Endothelial cell of umbilical vein (primary cell): ENCODE measurements at regions of chr11 and their contacts with region 1.

Region 1: DNA sequence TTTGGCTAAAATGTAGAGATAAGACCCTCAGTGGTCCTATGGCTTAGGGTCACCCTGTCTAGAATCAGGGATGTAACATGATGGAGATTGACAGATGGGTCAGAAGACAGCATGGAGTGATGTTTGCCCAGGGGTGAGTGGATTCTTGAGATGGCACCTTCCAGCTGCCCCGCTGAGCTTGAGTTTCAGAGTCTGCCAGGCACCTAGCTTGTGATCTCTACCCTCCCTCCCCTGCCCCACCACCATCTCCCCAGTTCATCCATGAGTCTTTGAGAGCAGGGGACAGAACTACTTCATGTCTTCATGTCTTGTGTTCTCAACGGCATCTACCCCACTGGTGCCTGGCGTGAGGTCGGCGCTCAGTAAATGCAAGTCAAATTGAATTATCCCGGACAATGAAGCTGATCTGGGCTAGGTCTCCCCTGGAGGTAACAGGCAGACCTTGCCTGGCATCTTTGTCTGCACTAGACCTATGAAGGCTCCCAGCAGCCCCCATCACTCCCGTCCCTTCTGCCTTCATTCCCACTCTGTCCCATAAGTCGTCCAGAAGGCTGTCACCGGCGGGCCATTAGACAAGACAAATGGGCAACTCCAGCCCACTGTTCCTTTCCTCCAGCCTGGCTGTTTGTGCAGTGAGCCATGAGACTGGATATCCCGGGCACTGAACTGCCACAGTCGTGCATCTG is 239.2 kb upstream of the TBCEL start:
- DNase-seq: no peak
- H3K4me3 ChIP-seq: no peak overlapping the region
- H3K27ac ChIP-seq: no peak overlapping the region
- H3K4me1 ChIP-seq: peaks cover 13% of the 10 kb centered on the region
- H3K27me3 ChIP-seq: peaks cover 2 to 5% of the 10 kb centered on the region in 2 experiments
- CTCF ChIP-seq: no peak
- POLR2A ChIP-seq: no peak

Region 2: GRCh38 chr11:120710354-120711131 is 74.2 kb before region 1 on chr11:
- CTCF ChIA-PET with region 1: interaction called, 6 read pairs
- POLR2A ChIA-PET with region 1: no interaction called
- dilution Hi-C with region 1: no loop called
- intact Hi-C with region 1: loop called (anchors 5 kb)
- DNase-seq: no peak
- H3K4me3 ChIP-seq: no peak overlapping the region
- H3K27ac ChIP-seq: no peak overlapping the region
- H3K4me1 ChIP-seq: peaks cover 8% of the 10 kb centered on the region
- H3K27me3 ChIP-seq: no peaks in the 10 kb centered on the region
- CTCF ChIP-seq: no peak
- POLR2A ChIP-seq: no peak

Region 3: GRCh38 chr11:120807421-120808150 is 22.9 kb after region 1 on chr11:
- CTCF ChIA-PET with region 1: interaction called, 12 read pairs
- POLR2A ChIA-PET with region 1: no interaction called
- dilution Hi-C with region 1: no loop called
- intact Hi-C with region 1: loop called (anchors 2 kb)
- DNase-seq: peak; percentile 61
- H3K4me3 ChIP-seq: no peak overlapping the region
- H3K27ac ChIP-seq: no peak overlapping the region
- H3K4me1 ChIP-seq: peaks cover 8% of the 10 kb centered on the region
- H3K27me3 ChIP-seq: no peaks in the 10 kb centered on the region
- CTCF ChIP-seq: no peak
- POLR2A ChIP-seq: no peak